PC-9 (cell line): ENCODE measurements at regions of chr2 and their contacts with region 1.

Region 1: GRCh38 chr2:14288016-14288415 is 344.5 kb upstream of the LRATD1 start:
- DNase-seq: peak; percentile 60 to 76
- H3K4me3 ChIP-seq: no peak overlapping the region
- H3K27ac ChIP-seq: no peak overlapping the region
- H3K4me1 ChIP-seq: 0 out of 2 replicates have a peak, but pooled peaks cover 5% of the 10 kb centered on the region
- H3K27me3 ChIP-seq: no peaks in the 10 kb centered on the region
- CTCF ChIP-seq: no peak; the same call in 1 of the 2 replicates

Region 2: DNA sequence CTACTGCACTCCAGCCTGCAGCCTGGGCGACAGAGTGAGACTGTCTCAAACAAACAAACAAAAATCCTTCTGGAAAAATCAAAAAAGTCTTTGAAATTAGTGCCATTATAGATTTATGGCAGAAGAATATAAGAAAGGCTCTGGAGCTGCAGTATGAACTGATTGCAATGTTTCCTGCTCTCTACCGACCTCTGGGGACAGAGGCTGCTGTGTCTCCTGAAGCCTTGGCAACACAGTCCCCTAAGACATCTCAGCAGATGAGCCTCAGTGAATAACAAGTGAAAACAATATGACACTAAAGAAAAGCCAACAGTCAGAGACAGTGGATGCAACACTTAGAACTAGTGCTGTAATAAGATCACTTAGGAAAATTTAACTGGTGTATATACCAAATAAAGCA is 150.4 kb before region 1 on chr2:
- CTCF ChIA-PET with region 1: no interaction called
- POLR2A ChIA-PET with region 1: no interaction called
- intact Hi-C with region 1: no loop called
- DNase-seq: no peak
- H3K4me3 ChIP-seq: no peak overlapping the region
- H3K27ac ChIP-seq: no peak overlapping the region
- H3K4me1 ChIP-seq: no peaks in the 10 kb centered on the region
- H3K27me3 ChIP-seq: no peaks in the 10 kb centered on the region
- CTCF ChIP-seq: peak; percentile 33; the same call in 1 of the 2 replicates

Region 3: DNA sequence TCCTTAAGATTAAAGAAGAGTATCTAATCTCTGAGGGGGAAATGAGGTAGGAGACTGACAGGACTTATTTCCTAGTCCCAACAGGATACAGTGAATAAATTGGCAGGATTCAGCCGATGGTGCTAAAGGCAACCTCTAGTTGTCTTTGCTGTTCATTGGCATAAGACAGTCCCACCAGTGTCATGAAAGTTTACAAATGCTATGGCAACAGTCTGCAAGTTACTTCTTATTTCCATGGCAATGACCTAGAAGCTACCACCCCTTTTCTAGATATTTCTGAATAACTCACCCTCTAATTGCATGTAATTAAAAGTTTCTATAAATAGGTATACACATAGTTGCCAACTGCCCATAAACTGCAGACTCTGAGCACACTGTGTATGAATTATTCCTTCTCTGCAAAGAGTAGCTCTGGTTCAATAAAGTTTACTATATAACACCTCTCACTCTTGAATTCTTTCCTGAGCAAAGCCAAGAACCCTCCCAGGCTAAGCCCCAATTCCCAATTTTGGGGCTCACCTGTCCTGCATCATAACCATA is 171.8 kb after region 1 on chr2:
- CTCF ChIA-PET with region 1: no interaction called
- POLR2A ChIA-PET with region 1: no interaction called
- intact Hi-C with region 1: no loop called
- DNase-seq: no peak
- H3K4me3 ChIP-seq: no peak overlapping the region
- H3K27ac ChIP-seq: no peak overlapping the region
- H3K4me1 ChIP-seq: no peaks in the 10 kb centered on the region
- H3K27me3 ChIP-seq: no peaks in the 10 kb centered on the region
- CTCF ChIP-seq: no peak

Region 4: DNA sequence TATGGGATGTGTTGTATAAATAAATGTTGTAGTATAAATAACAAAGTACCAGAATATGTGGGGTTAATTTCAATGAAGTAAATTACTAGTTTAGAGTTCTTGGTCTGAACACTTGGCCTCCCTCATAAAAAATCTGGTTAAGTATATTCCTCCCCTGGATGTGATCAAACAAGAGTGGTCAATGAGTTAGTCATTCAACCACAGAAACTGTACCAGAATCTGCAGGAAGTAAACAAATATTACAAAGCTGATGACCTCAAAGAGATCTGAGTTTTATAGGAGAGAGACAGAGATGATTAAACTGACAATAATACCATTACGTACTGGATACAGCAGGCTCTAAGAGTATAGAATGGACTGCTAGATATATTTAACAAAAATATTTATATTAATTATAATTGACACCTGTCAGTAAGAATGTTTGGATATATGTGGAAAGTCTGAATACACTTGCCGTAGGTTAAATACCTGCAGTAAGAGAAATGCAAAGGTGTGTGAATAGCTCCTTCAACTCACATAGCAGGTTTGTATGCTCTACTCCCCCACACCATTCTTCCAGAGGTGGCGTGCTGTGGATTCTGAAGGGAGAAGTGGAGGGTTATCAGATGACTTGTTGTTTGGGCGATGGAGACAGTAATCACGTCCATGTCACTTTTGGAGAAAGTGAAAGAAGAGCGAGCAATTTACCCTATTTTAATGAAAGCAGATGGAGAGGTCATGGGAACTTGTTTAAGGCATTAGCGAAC is 236.2 kb after region 1 on chr2:
- CTCF ChIA-PET with region 1: no interaction called
- POLR2A ChIA-PET with region 1: no interaction called
- intact Hi-C with region 1: loop called (anchors 5 kb)
- DNase-seq: peak; percentile 35 to 78
- H3K4me3 ChIP-seq: no peak overlapping the region
- H3K27ac ChIP-seq: peak overlapping the region; percentile 61
- H3K4me1 ChIP-seq: peaks cover 4% of the 10 kb centered on the region; the same call in 1 of the 2 replicates
- H3K27me3 ChIP-seq: no peaks in the 10 kb centered on the region
- CTCF ChIP-seq: no peak

Region 5: GRCh38 chr2:14720319-14720718 is 432.3 kb after region 1 on chr2:
- CTCF ChIA-PET with region 1: no interaction called
- POLR2A ChIA-PET with region 1: no interaction called
- intact Hi-C with region 1: no loop called
- DNase-seq: no peak
- H3K4me3 ChIP-seq: no peak overlapping the region
- H3K27ac ChIP-seq: no peak overlapping the region
- H3K4me1 ChIP-seq: 0 out of 2 replicates have a peak, but pooled peaks cover 5% of the 10 kb centered on the region
- H3K27me3 ChIP-seq: no peaks in the 10 kb centered on the region
- CTCF ChIP-seq: no peak

Region 6: DNA sequence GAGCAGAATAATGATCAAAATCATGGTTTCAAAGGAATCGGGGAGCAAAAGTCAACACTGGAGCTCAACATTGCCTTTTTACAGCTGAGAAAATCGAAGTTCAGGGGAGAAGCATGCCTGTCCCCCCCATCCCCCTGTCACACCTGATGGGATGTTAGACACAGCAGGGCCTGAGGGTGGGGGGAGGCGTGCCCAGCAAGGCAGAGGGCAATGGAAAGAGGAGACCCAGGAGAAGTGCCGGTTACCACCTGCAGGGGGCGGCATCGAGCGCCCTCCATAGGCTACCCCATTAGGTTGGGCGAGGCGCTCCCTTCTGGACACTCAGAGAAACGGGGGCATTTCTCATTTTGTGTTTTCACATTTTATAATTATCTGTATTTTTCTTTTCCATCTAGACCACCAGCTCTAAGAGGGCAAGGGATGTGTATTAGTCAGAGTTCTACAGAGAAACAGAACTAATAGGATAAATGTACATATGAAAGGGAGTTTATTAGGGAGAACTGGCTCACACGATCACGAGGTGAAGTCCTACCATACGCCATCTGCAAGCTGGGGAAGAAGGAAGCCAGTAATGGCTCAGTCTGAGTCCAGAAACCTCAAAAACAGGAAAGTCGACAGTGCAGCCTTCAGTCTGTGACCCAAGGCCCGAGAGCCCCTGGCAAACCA is 615.8 kb after region 1 on chr2:
- CTCF ChIA-PET with region 1: no interaction called
- POLR2A ChIA-PET with region 1: no interaction called
- intact Hi-C with region 1: loop called (anchors 1 kb)
- DNase-seq: peak; percentile 39 to 65
- H3K4me3 ChIP-seq: no peak overlapping the region
- H3K27ac ChIP-seq: no peak overlapping the region
- H3K4me1 ChIP-seq: no peaks in the 10 kb centered on the region
- H3K27me3 ChIP-seq: no peaks in the 10 kb centered on the region
- CTCF ChIP-seq: peak; percentile 91

Region 7: GRCh38 chr2:15588329-15588919 is 1300.4 kb after region 1 on chr2:
- CTCF ChIA-PET with region 1: no interaction called
- POLR2A ChIA-PET with region 1: no interaction called
- intact Hi-C with region 1: loop called (anchors 1 kb)
- DNase-seq: peak in 1 of 2 experiments; percentile 55
- H3K4me3 ChIP-seq: no peak overlapping the region
- H3K27ac ChIP-seq: no peak overlapping the region
- H3K4me1 ChIP-seq: peaks cover 15% of the 10 kb centered on the region
- H3K27me3 ChIP-seq: no peaks in the 10 kb centered on the region
- CTCF ChIP-seq: peak; percentile 79